ENCODE measurements at regions of chr6 and their contacts with region 1.

Region 1: DNA sequence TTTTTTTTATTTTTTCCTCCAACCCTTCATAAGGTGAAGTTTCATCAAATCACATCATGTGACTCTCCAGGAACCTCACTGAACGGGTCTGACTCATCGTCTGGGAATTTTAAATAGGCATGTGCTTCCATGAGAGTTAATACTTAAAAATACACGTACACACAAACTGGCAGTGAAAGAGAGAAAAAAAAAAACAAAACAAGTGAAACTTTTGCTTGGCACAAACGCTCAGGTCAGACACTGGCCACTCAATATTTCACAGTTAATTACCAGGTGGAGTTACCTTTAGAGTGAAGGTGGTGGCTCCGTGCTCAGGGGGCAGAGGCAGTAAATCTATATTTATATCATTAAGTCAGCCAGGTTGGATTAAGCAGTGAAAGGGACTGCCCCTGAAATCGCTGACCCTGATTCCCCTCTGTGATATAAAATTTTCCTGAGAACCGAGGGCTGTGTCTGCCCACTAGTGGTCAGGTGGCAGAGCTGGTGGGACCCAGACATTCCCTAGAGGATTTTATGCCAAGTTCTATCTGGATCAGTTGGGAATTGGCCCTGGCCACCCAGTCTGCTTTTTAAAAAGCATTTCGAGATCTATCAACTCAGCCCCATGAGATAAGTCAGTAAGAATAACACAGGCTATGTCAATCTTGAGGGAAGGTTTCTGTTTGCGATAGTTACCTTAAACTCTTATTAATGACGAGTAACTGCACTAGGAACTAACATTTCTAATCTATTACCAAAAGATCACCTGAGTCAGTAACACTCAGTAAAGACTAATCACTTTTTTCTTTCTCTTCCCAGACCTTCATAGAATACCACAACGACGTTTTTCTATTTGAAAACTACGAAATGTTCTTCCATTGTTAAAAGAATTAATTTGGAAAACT is 259.1 kb downstream of the HDGFL1 start:
- DNase-seq: peak; percentile 95
- H3K4me3 Mint-ChIP-seq: peak overlapping the region; percentile 68
- H3K27ac Mint-ChIP-seq: peak overlapping the region; percentile 92
- H3K4me1 Mint-ChIP-seq: peaks cover 22% of the 10 kb centered on the region
- H3K27me3 Mint-ChIP-seq: no peaks in the 10 kb centered on the region
- CTCF ChIP-seq: peak; percentile 72

Region 2: GRCh38 chr6:21748343-21749056 is 1079.9 kb before region 1 on chr6:
- CTCF ChIA-PET with region 1: no interaction called
- POLR2A ChIA-PET with region 1: no interaction called
- intact Hi-C with region 1: loop called (anchors 10 kb)
- DNase-seq: peak; percentile 73
- H3K4me3 Mint-ChIP-seq: no peak overlapping the region
- H3K27ac Mint-ChIP-seq: no peak overlapping the region
- H3K4me1 Mint-ChIP-seq: peaks cover 27% of the 10 kb centered on the region
- H3K27me3 Mint-ChIP-seq: no peaks in the 10 kb centered on the region
- CTCF ChIP-seq: no peak

Region 3: DNA sequence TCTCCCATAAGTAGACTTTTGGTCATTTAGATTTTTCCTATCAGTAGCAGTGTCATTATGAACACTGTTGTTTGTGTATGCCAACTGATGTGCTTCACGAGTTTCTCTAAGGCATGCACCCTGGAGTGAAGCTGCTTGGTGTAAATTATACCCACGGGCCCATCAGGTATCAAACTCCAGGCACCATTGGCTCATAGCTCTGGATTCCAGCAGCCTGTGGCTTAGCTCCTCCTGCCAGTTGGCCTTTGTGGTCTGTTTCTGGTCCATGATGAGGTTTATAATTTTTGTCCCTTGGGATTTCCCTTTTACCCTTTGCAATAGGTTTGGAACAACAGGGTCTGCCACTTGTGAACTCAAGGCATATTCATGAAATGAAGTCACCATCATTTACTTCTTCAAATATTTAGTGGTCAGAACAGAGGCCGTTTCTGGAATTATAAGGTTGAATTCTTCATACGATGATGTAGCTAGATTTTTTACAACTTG is 882.1 kb before region 1 on chr6:
- CTCF ChIA-PET with region 1: no interaction called
- POLR2A ChIA-PET with region 1: no interaction called
- intact Hi-C with region 1: loop called (anchors 10 kb)
- DNase-seq: no peak
- H3K4me3 Mint-ChIP-seq: no peak overlapping the region
- H3K27ac Mint-ChIP-seq: no peak overlapping the region
- H3K4me1 Mint-ChIP-seq: no peaks in the 10 kb centered on the region
- H3K27me3 Mint-ChIP-seq: no peaks in the 10 kb centered on the region
- CTCF ChIP-seq: no peak

Region 4: GRCh38 chr6:22113026-22113766 is 715.2 kb before region 1 on chr6:
- CTCF ChIA-PET with region 1: no interaction called
- POLR2A ChIA-PET with region 1: no interaction called
- intact Hi-C with region 1: loop called (anchors 5 kb)
- DNase-seq: peak; percentile 97
- H3K4me3 Mint-ChIP-seq: peak overlapping the region; percentile 33
- H3K27ac Mint-ChIP-seq: peak overlapping the region; percentile 69
- H3K4me1 Mint-ChIP-seq: peaks cover 16% of the 10 kb centered on the region
- H3K27me3 Mint-ChIP-seq: no peaks in the 10 kb centered on the region
- CTCF ChIP-seq: no peak

Region 5: GRCh38 chr6:22880686-22881433 is 52.4 kb after region 1 on chr6:
- CTCF ChIA-PET with region 1: no interaction called
- POLR2A ChIA-PET with region 1: no interaction called
- intact Hi-C with region 1: loop called (anchors 5 kb)
- DNase-seq: peak; percentile 84
- H3K4me3 Mint-ChIP-seq: no peak overlapping the region
- H3K27ac Mint-ChIP-seq: peak overlapping the region; percentile 99
- H3K4me1 Mint-ChIP-seq: peaks cover 16% of the 10 kb centered on the region
- H3K27me3 Mint-ChIP-seq: no peaks in the 10 kb centered on the region
- CTCF ChIP-seq: no peak

Region 6: GRCh38 chr6:22929311-22929985 is 101.0 kb after region 1 on chr6:
- CTCF ChIA-PET with region 1: no interaction called
- POLR2A ChIA-PET with region 1: no interaction called
- intact Hi-C with region 1: no loop called
- DNase-seq: no peak
- H3K4me3 Mint-ChIP-seq: no peak overlapping the region
- H3K27ac Mint-ChIP-seq: no peak overlapping the region
- H3K4me1 Mint-ChIP-seq: no peaks in the 10 kb centered on the region
- H3K27me3 Mint-ChIP-seq: no peaks in the 10 kb centered on the region
- CTCF ChIP-seq: no peak